ENCODE measurements at regions of chr19 and their contacts with region 1.

Region 1: DNA sequence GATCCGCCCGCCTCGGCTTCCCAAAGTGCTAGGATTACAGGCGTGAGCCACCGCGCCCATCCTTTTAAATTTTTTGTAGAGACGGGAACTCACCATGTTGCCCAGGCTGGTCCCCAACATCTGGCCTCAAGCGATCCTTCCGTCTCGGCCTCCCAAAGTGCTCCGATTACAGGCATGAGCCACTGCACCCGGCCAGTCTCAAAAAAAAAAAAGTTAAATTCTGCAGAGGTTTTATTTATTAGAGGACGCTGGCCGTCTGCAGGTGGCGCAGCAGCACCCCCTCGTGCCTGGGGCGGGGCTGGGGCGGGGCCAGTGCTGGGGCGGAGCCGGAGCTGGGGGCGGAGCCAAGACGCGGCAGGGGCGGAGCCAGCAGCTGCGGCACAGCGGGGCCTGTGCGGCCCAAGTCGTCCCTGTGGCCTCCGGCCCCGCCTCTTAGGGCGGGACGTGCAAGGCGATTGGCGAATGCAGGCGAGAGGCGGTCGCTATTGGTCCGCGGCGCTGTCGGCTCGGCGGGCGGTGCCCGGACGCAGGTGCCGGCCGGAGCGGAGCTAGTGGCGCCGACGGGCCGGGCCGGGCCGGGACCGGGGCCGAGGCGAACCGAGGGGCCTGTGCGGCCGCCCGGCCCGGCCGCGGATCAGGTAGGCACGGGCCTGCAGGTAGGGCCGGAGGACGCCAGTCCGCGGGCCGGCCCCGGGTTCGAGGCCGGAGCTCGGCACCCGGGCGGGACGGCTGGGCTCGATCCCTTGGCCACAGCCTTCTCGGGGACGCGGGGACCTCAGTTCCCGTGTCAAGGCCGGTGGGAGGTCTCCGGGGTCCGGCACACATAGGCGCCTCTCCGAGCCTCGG is at the start of gene MARCHF2:
- DNase-seq: peak; percentile 91 to 97 (median 93)
- H3K4me3 ChIP-seq: peak within 1 kb of the TSS; percentile 74
- H3K4me3 Mint-ChIP-seq: peak within 1 kb of the TSS; percentile 70 to 82 (median 74)
- H3K27ac ChIP-seq: peak within 1 kb of the TSS; percentile 47
- H3K27ac Mint-ChIP-seq: peak within 1 kb of the TSS in 6 of 8 donors; percentile 7 to 87 (median 64)
- H3K4me1 ChIP-seq: peaks cover 6% of the 10 kb centered on the region
- H3K4me1 Mint-ChIP-seq: peaks cover 8 to 17% (median 14%) of the 10 kb centered on the region in 3 donors
- H3K27me3 ChIP-seq: no peaks in the 10 kb centered on the region
- H3K27me3 Mint-ChIP-seq: no peaks in the 10 kb centered on the region
- total RNA-seq, gene MARCHF2: 13.1 to 14.1 TPM

Region 2: GRCh38 chr19:8321060-8321985 is 91.7 kb before region 1 on chr19 and contains the starts of genes NDUFA7 and RPS28:
- CTCF ChIA-PET with region 1: no interaction called
- POLR2A ChIA-PET with region 1: no interaction called
- DNase-seq: peak; percentile 96 to 99 (median 96)
- H3K4me3 ChIP-seq: peak within 1 kb of the TSS; percentile 98
- H3K4me3 Mint-ChIP-seq: peak within 1 kb of the TSS; percentile 94 to 98 (median 96)
- H3K27ac ChIP-seq: peak within 1 kb of the TSS; percentile 95
- H3K27ac Mint-ChIP-seq: peak within 1 kb of the TSS; percentile 97 to 100 (median 99)
- H3K4me1 ChIP-seq: peaks cover 33% of the 10 kb centered on the region
- H3K4me1 Mint-ChIP-seq: peaks cover 22 to 50% (median 33%) of the 10 kb centered on the region in 3 donors
- H3K27me3 ChIP-seq: no peaks in the 10 kb centered on the region
- H3K27me3 Mint-ChIP-seq: no peaks in the 10 kb centered on the region
- total RNA-seq, gene NDUFA7: 86.0 to 93.3 TPM
- total RNA-seq, gene RPS28: 2,153 to 2,200 TPM

Region 3: GRCh38 chr19:8423817-8424223 is 10.8 kb after region 1 on chr19:
- CTCF ChIA-PET with region 1: interaction called, 10 read pairs
- POLR2A ChIA-PET with region 1: interaction called, 4 read pairs
- DNase-seq: no peak
- H3K4me3 ChIP-seq: no peak overlapping the region
- H3K4me3 Mint-ChIP-seq: no peak overlapping the region
- H3K27ac ChIP-seq: peak overlapping the region; percentile 38
- H3K27ac Mint-ChIP-seq: no peak overlapping the region
- H3K4me1 ChIP-seq: no peaks in the 10 kb centered on the region
- H3K4me1 Mint-ChIP-seq: no peaks in the 10 kb centered on the region
- H3K27me3 ChIP-seq: no peaks in the 10 kb centered on the region
- H3K27me3 Mint-ChIP-seq: no peaks in the 10 kb centered on the region

Region 4: GRCh38 chr19:8444645-8445487 is 31.9 kb after region 1 on chr19 and contains the start of gene HNRNPM:
- CTCF ChIA-PET with region 1: interaction called, 10 read pairs
- POLR2A ChIA-PET with region 1: interaction called, 16 read pairs
- DNase-seq: peak; percentile 100
- H3K4me3 ChIP-seq: peak within 1 kb of the TSS; percentile 83
- H3K4me3 Mint-ChIP-seq: peak within 1 kb of the TSS; percentile 93 to 100 (median 98)
- H3K27ac ChIP-seq: peak within 1 kb of the TSS; percentile 96
- H3K27ac Mint-ChIP-seq: peak within 1 kb of the TSS; percentile 93 to 100 (median 99)
- H3K4me1 ChIP-seq: peaks cover 39% of the 10 kb centered on the region
- H3K4me1 Mint-ChIP-seq: peaks cover 41 to 50% (median 49%) of the 10 kb centered on the region in 3 donors
- H3K27me3 ChIP-seq: no peaks in the 10 kb centered on the region
- H3K27me3 Mint-ChIP-seq: no peaks in the 10 kb centered on the region
- total RNA-seq, gene HNRNPM: 336 to 338 TPM

Region 5: GRCh38 chr19:8505680-8506401 is 92.8 kb after region 1 on chr19:
- CTCF ChIA-PET with region 1: interaction called, 10 read pairs
- POLR2A ChIA-PET with region 1: interaction called, 3 read pairs
- DNase-seq: peak; percentile 47 to 73 (median 56)
- H3K4me3 ChIP-seq: peak overlapping the region; percentile 66
- H3K4me3 Mint-ChIP-seq: peak overlapping the region; percentile 61 to 96 (median 87)
- H3K27ac ChIP-seq: peak overlapping the region; percentile 1
- H3K27ac Mint-ChIP-seq: peak overlapping the region; percentile 35 to 94 (median 75)
- H3K4me1 ChIP-seq: peaks cover 13% of the 10 kb centered on the region
- H3K4me1 Mint-ChIP-seq: peaks cover 10 to 19% (median 14%) of the 10 kb centered on the region in 3 donors
- H3K27me3 ChIP-seq: no peaks in the 10 kb centered on the region
- H3K27me3 Mint-ChIP-seq: no peaks in the 10 kb centered on the region

Region 6: DNA sequence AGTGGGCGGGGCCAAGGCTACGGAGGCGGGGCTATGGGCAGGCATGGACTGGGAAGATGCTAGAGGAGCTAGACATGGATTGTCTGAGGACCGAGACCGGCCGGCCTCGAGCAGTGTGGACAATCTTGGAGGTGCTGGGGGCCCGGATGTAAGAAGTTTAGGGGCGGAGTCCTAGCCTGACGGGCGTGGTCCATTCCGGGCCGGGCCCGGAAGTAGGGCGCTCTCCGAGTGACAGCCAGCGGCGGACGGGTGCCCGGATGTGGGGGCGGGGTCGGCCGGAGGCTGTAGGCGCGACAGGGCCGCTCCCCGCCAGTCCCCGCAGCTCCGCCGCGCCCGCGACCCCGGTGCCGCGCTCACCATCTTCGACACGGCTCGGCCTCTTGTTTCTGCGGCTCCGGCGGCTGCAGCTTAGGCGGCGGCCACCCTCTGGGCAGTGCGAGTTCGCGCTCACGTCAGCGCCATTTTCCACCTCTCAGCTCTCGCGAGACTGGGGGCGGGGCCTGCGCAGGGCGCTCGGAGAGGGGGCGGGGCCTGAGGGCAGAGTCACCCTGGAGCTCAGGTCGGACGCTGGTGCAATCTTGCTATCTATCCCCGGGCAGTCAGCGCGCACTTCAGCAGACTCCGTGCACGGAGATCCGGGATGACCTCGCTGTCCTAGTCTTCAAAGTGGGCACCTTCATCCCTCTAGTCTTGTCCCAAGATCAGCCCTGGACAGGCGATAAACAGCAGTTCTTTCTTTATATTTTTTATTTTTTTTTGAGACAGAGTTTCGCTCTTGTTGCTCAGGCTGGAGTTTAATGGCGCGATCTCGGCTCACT is 100.9 kb after region 1 on chr19 and contains the start of gene ZNF414:
- CTCF ChIA-PET with region 1: interaction called, 3 read pairs
- POLR2A ChIA-PET with region 1: interaction called, 10 read pairs
- DNase-seq: peak; percentile 94 to 98 (median 97)
- H3K4me3 ChIP-seq: peak within 1 kb of the TSS; percentile 68
- H3K4me3 Mint-ChIP-seq: peak within 1 kb of the TSS; percentile 89 to 97 (median 93)
- H3K27ac ChIP-seq: peak within 1 kb of the TSS; percentile 83
- H3K27ac Mint-ChIP-seq: peak within 1 kb of the TSS; percentile 94 to 99 (median 98)
- H3K4me1 ChIP-seq: peaks cover 64% of the 10 kb centered on the region
- H3K4me1 Mint-ChIP-seq: peaks cover 46 to 62% (median 52%) of the 10 kb centered on the region in 3 donors
- H3K27me3 ChIP-seq: no peaks in the 10 kb centered on the region
- H3K27me3 Mint-ChIP-seq: peaks cover 0 to 4% of the 10 kb centered on the region in 2 donors
- total RNA-seq, gene ZNF414: 25.7 to 26.0 TPM